ENCODE measurements at regions of chr11 and their contacts with region 1.

Region 1: DNA sequence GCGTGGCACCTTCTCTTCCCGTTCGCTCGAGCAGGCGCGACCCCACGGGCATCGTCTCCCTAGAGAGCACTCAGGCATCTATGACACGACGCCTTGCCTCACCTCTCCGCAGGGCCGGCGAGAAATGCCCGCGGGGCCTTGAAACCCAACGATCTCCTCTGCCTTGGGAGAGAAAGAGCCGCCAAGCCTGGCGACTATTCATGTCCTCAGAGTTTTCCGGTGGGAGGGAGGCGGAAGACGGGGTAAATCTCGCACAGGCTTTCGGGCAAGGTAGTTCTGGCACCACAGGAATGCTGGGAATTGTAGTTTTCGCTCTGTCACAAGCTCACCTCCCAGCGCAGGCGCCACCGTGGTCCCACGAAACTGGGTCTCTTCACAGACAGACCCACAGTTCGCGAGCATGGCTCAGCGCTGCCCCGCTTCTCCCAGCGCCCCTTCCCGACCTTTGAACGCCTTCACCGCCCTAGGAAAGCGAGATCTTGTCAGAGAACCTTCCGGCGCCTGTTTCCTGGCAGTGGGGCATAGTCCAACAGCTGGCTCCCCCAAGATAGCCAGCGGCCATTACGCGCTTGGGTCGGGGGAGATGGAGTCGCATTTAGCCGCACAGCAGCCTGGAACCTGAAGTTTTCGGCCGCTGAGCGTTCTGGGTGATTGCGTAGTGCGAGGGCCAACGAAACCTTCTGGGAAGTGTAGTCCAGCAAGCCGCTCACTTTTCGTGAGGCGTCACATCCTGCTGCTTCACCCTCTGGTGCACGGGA is at the start of gene CCDC90B:
- DNase-seq: peak; percentile 93
- H3K27ac ChIP-seq: peak within 1 kb of the TSS; percentile 98
- CTCF ChIP-seq: peak; percentile 61

Region 2: DNA sequence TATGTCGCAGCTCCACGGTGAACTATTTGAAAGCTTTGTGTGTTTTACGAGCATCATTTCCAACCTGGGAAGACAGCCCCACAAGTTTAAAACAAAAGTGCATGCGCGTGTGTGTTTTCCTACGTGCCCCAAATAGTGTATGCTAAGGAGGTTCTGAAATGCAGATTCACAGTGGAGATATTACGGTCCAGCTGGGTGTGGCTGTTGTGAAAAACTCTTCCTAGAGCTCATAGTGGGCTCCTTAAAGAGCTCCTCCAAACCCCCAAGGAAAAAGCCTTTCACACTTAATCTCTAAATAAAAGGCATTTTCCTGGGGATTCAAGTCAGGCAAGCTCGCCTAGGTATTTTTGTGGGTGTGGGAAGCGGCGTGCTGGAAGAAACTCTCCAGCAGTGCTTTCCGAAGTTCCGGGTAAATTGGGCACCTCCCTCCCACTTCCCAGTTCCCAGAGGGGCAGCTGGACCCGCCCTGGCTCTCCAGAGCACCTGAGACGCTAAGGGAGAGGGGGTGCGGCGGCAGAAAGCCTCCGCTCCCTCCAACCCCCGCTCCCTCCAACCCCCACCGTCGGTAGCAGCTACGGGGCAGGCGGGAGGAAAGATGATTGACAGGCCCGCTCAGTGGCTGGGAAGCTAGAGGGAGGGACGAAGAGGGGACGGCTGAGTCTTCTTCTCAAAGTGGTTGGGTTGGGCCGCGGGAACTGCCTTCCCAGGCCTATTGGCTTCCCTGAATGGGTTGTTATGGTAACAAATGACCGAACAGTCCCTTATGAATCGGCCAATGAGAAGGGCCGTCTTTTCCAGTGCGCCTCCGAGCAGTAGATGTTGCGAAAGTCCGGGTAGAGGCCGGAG is 129.6 kb before region 1 on chr11:
- CTCF ChIA-PET with region 1: no interaction called
- POLR2A ChIA-PET with region 1: interaction called, 10 read pairs
- DNase-seq: peak; percentile 99
- H3K27ac ChIP-seq: peak overlapping the region; percentile 95
- CTCF ChIP-seq: no peak

Region 3: DNA sequence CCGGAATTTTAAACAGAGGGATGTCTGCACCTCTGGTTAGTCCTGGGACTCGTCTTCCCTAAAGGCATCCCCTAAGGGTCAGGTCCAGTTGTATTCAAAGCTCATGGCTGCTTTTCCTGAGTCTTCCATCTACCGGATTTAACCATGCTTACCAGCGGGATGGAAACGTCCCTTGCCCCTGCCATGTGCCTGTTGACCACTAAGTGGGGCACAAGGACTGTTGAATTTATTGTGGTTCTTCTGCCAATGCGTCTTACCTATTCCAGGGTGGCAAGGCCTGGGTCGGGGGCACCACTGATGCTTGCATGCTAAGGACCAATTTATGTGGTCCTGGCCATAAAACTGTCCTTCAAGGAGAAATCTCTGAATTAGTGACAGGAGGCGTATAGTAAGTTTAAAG is 66.9 kb before region 1 on chr11:
- CTCF ChIA-PET with region 1: no interaction called
- POLR2A ChIA-PET with region 1: interaction called, 15 read pairs
- DNase-seq: no peak
- H3K27ac ChIP-seq: no peak overlapping the region
- CTCF ChIP-seq: no peak

Region 4: GRCh38 chr11:83317757-83318690 is 32.1 kb after region 1 on chr11:
- CTCF ChIA-PET with region 1: no interaction called
- POLR2A ChIA-PET with region 1: no interaction called
- DNase-seq: no peak
- H3K27ac ChIP-seq: no peak overlapping the region
- CTCF ChIP-seq: no peak